ENCODE measurements at regions of chr16 and their contacts with region 1.

Region 1: DNA sequence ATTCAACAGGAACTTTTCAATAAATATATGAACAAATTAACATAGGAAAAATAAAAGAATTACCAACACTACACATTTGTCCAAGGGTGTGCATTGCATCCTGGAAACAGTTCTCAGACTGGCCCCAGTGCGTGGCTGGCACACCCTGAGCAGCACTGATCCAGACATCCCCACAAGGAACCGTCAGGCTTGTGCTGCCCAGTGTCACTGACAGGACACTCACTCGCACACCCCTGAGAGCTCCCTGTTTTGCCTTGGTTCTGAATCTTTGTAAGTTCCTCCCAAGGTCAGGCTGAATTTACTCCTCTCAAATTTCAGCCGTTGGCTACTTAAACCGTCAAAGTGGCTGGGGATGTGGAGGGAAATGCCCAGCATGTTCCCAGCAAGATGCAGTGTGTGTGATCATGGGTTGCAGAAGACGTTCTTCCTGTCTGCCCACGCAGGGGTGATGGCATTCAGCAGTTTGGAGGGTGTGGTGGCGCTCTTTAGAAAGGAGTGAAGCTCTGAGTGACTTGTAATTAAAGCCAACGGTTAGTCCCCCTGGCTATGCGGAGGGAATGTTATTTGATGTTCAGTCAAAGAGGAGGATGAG is 1.7 kb downstream of the MT2A start:
- DNase-seq: no peak

Region 2: DNA sequence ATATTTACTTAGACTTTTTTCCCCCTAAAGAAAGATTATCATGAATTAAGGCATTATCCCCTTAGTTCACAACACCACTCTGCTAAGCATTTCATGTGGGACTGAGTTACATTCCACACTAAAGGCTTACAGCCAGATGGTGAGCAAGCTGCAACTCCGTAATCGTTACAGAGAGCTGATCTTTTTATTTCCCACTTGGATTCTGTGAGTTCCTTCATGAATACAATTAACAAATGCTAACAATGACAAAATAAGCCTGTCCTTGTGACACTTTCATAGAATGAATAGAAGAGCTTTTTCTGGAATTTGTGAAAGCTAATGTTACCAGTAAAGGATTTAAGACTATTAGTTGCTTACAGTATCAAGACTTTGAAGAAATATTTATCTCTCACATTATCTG is 150.0 kb before region 1 on chr16:
- in situ Hi-C with region 1: no loop called
- DNase-seq: no peak

Region 3: DNA sequence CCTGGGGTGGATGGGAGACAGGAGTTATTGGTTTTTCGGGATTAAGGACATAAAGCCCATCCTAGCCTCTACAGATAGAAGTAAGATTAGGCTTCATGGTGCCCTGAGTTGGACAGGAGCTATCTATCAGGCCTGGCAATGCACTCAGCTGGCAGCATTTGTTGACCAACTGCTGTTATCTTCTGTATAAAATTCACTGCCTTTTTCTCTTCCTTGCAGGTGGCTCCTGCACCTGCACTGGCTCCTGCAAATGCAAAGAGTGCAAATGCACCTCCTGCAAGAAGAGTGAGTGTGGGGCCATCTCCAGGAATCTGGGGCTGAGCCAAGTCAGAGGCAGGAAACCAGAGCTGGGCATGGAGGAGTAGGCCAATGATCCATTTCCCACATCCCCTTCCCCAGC is 28.9 kb after region 1 on chr16:
- in situ Hi-C with region 1: no loop called
- DNase-seq: no peak

Region 4: DNA sequence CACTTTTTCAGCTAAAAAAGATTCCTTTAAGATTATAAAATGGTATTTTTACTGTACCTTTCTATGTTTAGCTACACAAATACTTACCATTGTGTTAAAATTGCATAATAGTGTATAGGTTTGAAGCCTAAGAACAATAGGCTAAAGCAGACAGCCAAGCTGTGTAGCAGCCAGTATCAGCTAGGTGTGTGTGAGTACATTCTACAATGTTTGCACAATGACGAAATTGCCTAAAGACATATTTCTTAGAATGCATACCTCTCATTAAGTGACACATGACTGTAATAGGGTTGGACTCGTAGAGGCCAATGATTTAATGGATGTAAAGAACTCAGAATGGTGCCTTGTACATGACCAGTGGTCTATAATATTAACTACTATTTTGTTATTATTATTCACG is 39.7 kb after region 1 on chr16:
- in situ Hi-C with region 1: loop called (anchors 5 kb)
- DNase-seq: no peak

Measured in G401 (cell line).